ENCODE measurements at regions of chr9 and their contacts with region 1.

Region 1: DNA sequence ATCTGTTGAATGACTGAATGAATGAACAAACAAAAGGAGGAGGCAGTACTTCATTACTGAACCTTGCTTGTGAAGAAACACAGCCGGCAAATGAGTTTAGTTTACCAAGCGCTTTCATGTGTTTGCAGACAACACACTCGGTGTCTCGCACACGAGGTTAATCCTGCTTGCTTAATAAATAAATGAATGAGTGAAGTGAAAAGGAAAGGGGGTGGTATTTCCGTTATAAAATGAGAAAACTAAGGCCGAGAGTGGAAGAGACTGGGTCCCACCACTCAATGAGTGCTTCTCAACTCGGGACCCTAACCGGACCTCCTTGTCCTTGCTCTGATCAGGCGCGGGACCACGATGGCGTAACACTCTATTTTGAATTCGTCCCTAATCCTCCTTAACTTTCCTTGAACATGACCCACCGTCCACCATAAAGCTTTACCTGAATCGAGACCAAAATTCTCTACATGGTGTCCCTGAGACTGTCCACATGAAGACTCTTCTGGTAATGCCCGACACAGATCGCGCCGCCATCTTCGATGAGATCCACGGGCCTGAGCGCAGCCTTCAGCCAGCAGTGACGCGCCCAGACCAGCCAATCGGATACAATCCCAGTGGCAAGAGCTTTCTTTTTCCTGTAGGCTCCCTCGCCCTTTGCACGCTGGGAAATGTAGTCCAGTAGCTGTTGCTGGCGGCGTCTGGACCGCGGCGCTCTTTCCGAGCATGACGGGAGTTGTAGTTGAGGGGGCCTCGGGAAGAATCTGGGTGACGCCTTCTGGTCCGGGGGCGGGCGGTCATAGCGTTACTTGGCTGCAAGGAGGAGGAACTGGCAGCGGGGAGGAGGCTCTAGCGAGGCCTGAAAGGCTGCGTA is at the starts of genes MRPL50 and ZNF189:
- DNase-seq: peak; percentile 98 to 99 (median 98)
- H3K4me3 ChIP-seq: peak within 1 kb of the TSS; percentile 87 to 92 (median 91)
- H3K4me3 Mint-ChIP-seq: peak within 1 kb of the TSS; percentile 90 to 99
- H3K27ac ChIP-seq: peak within 1 kb of the TSS; percentile 79 to 98
- H3K27ac Mint-ChIP-seq: peak within 1 kb of the TSS; percentile 96 to 100 (median 99)
- H3K4me1 ChIP-seq: peaks cover 21 to 34% of the 10 kb centered on the region in 2 donors
- H3K4me1 Mint-ChIP-seq: peaks cover 33% of the 10 kb centered on the region
- H3K27me3 ChIP-seq: no peaks in the 10 kb centered on the region
- H3K27me3 Mint-ChIP-seq: no peaks in the 10 kb centered on the region
- CTCF ChIP-seq: no peak
- polyA plus RNA-seq, gene MRPL50: 1.9 to 4.9 (median 4.8) TPM
- polyA plus RNA-seq, gene ZNF189: 0.72 to 1.8 (median 1.2) TPM

Region 2: DNA sequence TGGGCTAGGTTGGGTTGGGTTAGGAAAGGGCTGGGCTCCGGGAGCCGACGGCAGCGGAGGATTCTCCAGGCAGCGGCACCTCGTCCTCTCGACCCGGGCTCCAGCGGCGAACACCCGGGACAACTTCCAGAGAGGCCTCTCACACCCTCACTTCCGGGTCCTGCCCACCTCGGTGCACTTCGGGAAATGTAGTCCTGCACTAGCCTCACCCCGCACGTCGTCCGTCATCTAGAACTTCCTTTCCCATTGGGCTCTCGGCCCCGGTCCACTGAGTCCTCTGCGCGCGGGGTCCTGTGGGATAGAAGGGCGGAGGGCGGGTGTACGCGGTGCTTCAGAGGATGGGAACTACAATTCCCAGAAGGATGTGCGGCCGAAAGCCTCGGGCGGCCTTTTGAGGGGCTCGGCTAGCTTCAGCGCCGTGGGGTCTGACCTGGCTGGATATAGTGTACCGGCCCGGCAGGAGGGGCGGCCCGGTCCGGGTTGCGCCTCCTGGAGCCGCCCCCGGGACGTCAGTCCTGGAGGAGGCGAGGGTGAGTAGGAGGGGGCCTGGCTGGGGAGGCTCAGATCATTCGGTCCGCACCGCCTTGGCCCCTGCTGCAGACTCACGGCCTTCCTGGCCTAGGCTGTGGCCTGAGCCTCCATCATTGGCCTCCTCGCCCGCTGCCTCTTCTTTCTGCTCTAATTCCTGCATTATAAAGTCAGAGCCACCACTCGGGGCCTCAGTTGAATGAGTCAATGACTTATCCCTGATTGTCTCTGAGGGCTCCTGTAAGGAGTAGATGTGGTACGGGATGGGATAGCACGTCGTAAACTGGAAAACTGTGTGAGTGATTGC is 1299.2 kb before region 1 on chr9 and contains the starts of genes ERP44 and INVS:
- intact Hi-C with region 1: loop called in 1 of 2 experiments (anchors 10 kb)
- DNase-seq: peak; percentile 98 to 99 (median 98)
- H3K4me3 ChIP-seq: peak within 1 kb of the TSS; percentile 83 to 97 (median 96)
- H3K4me3 Mint-ChIP-seq: peak within 1 kb of the TSS; percentile 100
- H3K27ac ChIP-seq: peak within 1 kb of the TSS; percentile 99 to 100
- H3K27ac Mint-ChIP-seq: peak within 1 kb of the TSS; percentile 100
- H3K4me1 ChIP-seq: peaks cover 16 to 24% of the 10 kb centered on the region in 2 donors
- H3K4me1 Mint-ChIP-seq: peaks cover 30% of the 10 kb centered on the region
- H3K27me3 ChIP-seq: no peaks in the 10 kb centered on the region
- H3K27me3 Mint-ChIP-seq: peaks cover 0 to 2% (median 0%) of the 10 kb centered on the region in 3 donors
- CTCF ChIP-seq: no peak
- polyA plus RNA-seq, gene ERP44: 18.4 to 74.0 (median 66.3) TPM
- polyA plus RNA-seq, gene INVS: 2.9 to 6.7 (median 4.2) TPM

Region 3: DNA sequence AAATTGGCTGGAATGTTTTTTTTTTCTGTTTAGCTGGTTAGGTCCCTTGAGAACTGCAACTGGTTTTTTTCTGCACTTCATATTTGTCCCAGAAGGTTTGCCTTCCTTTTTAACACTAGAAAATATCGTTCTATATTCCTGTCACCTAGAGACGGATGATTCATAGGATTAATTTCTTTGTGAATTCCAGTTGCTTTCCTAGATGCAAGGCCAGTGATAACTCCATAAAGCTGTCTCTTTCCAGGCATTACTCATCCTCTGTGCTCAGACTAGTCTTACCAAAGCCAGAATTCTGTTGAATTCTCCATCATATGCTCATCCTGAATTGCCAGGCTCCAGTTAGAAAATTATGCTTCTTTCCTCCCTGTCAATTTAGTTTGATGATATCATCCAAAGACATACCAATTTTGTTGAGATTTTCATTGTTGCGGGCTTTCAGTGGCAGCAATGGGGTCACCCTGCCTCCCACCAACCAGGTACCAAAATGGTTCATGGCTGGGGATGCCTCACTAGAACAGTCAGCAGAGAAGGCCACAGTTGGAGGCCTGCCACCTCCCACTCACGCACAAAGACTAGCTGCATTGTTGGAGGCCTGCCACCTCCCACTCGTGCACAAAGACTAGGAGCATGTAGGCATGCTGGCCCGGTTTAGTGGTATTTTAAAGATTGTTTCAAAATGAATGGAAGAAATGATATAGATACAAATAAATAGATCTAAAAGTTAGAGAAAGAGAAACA is 22.0 kb before region 1 on chr9:
- intact Hi-C with region 1: no loop called
- DNase-seq: no peak
- H3K4me3 ChIP-seq: no peak overlapping the region
- H3K4me3 Mint-ChIP-seq: no peak overlapping the region
- H3K27ac ChIP-seq: no peak overlapping the region
- H3K27ac Mint-ChIP-seq: no peak overlapping the region
- H3K4me1 ChIP-seq: no peaks in the 10 kb centered on the region
- H3K4me1 Mint-ChIP-seq: no peaks in the 10 kb centered on the region
- H3K27me3 ChIP-seq: no peaks in the 10 kb centered on the region
- H3K27me3 Mint-ChIP-seq: peaks cover 0 to 4% (median 4%) of the 10 kb centered on the region in 3 donors
- CTCF ChIP-seq: no peak

Region 4: DNA sequence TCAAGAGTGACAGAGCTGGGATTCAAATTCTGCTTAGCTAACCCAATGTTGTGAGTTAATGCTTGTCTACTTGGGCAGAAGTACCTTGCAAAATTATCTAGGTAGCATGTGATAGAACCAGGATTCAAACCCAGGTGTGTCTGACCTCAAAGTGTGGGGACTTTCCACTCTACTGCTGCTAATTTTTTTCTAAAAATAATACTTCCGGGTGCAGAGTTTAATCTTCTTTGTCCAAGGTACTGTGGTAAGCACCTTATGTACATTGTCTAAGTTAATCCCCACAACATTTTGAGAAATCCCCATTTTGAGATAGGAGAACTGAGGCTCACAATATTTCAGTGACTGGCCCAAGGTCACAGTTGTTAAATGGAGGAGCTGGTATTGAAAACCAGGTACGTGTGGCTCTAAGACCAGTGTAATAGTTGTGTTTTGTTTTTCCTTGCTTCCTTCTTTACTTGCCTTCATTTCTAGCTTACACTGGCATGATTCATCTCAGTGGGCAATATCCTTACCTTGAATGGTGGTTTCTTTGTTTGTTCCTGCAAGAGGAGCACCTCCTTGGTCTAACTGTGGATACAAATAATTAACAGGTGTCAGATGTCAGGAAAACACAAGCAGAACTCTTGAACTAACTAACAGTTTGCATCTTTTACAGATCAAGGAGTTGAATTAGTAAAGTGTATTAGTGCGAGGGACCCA is 29.8 kb after region 1 on chr9:
- intact Hi-C with region 1: no loop called
- DNase-seq: no peak
- H3K4me3 ChIP-seq: no peak overlapping the region
- H3K4me3 Mint-ChIP-seq: no peak overlapping the region
- H3K27ac ChIP-seq: no peak overlapping the region
- H3K27ac Mint-ChIP-seq: no peak overlapping the region
- H3K4me1 ChIP-seq: no peaks in the 10 kb centered on the region
- H3K4me1 Mint-ChIP-seq: no peaks in the 10 kb centered on the region
- H3K27me3 ChIP-seq: peaks cover 0 to 2% of the 10 kb centered on the region in 2 donors
- H3K27me3 Mint-ChIP-seq: peaks cover 0 to 5% (median 3%) of the 10 kb centered on the region in 3 donors
- CTCF ChIP-seq: no peak

Region 5: GRCh38 chr9:101536938-101537337 is 138.6 kb after region 1 on chr9:
- intact Hi-C with region 1: loop called (anchors 5 kb)
- DNase-seq: no peak
- H3K4me3 ChIP-seq: no peak overlapping the region
- H3K4me3 Mint-ChIP-seq: no peak overlapping the region
- H3K27ac ChIP-seq: no peak overlapping the region
- H3K27ac Mint-ChIP-seq: no peak overlapping the region
- H3K4me1 ChIP-seq: peaks cover 11 to 17% of the 10 kb centered on the region in 2 donors
- H3K4me1 Mint-ChIP-seq: peaks cover 18% of the 10 kb centered on the region
- H3K27me3 ChIP-seq: no peaks in the 10 kb centered on the region
- H3K27me3 Mint-ChIP-seq: peaks cover 0 to 2% (median 0%) of the 10 kb centered on the region in 3 donors
- CTCF ChIP-seq: no peak

Region 6: GRCh38 chr9:101639785-101640665 is 241.7 kb after region 1 on chr9:
- intact Hi-C with region 1: no loop called
- DNase-seq: no peak
- H3K4me3 ChIP-seq: no peak overlapping the region
- H3K4me3 Mint-ChIP-seq: no peak overlapping the region
- H3K27ac ChIP-seq: no peak overlapping the region
- H3K27ac Mint-ChIP-seq: no peak overlapping the region
- H3K4me1 ChIP-seq: peaks cover 9 to 10% of the 10 kb centered on the region in 2 donors
- H3K4me1 Mint-ChIP-seq: peaks cover 21% of the 10 kb centered on the region
- H3K27me3 ChIP-seq: no peaks in the 10 kb centered on the region
- H3K27me3 Mint-ChIP-seq: no peaks in the 10 kb centered on the region
- CTCF ChIP-seq: no peak

Measured in CD14-positive monocyte (primary cell).